GM12878 (cell line): ENCODE measurements at regions of chr14 and their contacts with region 1.

Region 1: DNA sequence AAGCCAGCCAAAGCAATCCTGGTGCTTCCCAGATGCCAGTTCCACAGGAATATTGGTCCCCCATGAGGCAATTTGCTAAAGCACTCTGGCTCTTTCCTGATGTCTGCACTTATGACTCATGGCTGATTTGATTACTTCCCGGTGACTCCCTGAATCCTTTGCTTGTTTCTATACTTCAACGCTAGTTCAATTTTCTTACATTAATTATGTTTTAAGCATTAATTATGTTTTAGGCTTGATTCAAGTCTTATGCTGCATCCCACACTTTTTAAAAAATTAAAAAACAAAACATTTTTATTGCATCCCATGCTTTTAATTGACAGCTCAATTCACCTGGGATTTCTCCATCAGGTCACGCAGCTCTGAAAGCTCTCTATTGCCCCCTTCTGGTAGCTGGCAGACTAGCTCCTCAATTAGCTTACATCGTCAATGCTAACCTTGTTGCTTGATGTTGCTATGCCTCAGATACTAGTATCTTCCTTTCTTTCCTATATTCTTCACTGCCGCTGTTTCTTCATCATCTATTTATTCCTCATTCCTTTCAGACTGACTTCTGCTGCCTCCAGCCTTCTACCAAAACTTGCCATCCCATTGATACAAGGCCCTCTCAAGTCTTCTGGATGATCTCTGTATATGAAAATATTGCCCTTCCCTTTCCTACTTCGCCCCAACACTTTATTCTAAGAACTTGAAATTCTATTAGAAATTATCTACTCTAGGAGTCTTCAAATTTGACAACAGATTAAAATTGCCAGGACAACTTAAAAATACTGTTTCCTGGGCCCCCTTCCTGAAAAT is 32.0 kb downstream of the TSHR start:
- DNase-seq: no peak
- ATAC-seq: peak; percentile 86
- H3K4me3 ChIP-seq: no peak overlapping the region
- H3K27ac ChIP-seq: no peak overlapping the region
- H3K4me1 ChIP-seq: no peaks in the 10 kb centered on the region
- H3K27me3 ChIP-seq: peaks cover 2 to 14% of the 10 kb centered on the region in 2 experiments
- CTCF ChIP-seq: peak; percentile 88 to 90 (median 89)
- EP300 ChIP-seq: no peak
- POLR2A ChIP-seq: no peak
- RAD21 ChIP-seq: peak; percentile 91

Region 2: GRCh38 chr14:80202888-80203562 is 784.4 kb before region 1 on chr14:
- CTCF ChIA-PET with region 1: interaction called, 4 read pairs
- POLR2A ChIA-PET with region 1: no interaction called
- RAD21 ChIA-PET with region 1: no interaction called
- SMC1A ChIA-PET with region 1: no interaction called
- in situ Hi-C with region 1: no loop called
- intact Hi-C with region 1: loop called (anchors 10 kb)
- DNase-seq: no peak
- ATAC-seq: peak; percentile 71
- H3K4me3 ChIP-seq: no peak overlapping the region
- H3K27ac ChIP-seq: no peak overlapping the region
- H3K4me1 ChIP-seq: no peaks in the 10 kb centered on the region
- H3K27me3 ChIP-seq: no peaks in the 10 kb centered on the region
- CTCF ChIP-seq: peak; percentile 56 to 79 (median 65)
- EP300 ChIP-seq: no peak
- POLR2A ChIP-seq: no peak
- RAD21 ChIP-seq: peak; percentile 41

Region 3: DNA sequence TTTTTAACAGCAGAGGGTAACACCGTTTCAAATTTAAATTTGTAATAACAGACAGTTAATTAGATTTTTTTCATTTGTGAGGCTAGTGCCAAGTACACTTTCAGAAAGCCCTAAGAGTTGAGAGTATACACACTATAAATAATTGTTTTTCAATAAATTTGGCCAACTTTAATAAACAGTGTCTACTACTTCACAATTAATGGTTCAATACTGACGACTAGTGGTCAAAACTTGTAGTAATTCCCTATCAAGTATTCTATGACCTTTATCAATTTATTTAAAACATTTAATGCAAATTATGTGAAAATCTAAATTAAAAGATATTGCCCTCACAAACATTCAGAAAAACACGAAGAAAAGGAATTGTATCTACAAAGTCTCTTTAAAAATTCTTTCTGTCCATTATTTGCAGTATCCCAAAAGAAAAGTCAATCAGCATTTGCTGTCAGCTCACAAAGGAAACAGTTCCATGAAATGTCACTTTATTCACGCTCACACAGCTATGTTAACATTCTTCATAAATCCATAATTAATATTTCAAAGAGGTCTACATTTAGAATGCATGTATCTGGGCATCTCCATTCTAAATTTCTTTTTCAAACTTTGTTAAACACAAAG is 137.1 kb before region 1 on chr14:
- CTCF ChIA-PET with region 1: interaction called, 7 read pairs
- POLR2A ChIA-PET with region 1: no interaction called
- RAD21 ChIA-PET with region 1: interaction called, 3 read pairs
- SMC1A ChIA-PET with region 1: interaction called, 5 read pairs
- in situ Hi-C with region 1: no loop called
- intact Hi-C with region 1: loop called (anchors 2 kb)
- DNase-seq: no peak
- ATAC-seq: peak; percentile 73
- H3K4me3 ChIP-seq: no peak overlapping the region
- H3K27ac ChIP-seq: no peak overlapping the region
- H3K4me1 ChIP-seq: no peaks in the 10 kb centered on the region
- H3K27me3 ChIP-seq: no peaks in the 10 kb centered on the region
- CTCF ChIP-seq: peak; percentile 30 to 60 (median 33); a peak in 2 of 6 replicates
- EP300 ChIP-seq: no peak
- POLR2A ChIP-seq: no peak
- RAD21 ChIP-seq: peak; percentile 71

Region 4: DNA sequence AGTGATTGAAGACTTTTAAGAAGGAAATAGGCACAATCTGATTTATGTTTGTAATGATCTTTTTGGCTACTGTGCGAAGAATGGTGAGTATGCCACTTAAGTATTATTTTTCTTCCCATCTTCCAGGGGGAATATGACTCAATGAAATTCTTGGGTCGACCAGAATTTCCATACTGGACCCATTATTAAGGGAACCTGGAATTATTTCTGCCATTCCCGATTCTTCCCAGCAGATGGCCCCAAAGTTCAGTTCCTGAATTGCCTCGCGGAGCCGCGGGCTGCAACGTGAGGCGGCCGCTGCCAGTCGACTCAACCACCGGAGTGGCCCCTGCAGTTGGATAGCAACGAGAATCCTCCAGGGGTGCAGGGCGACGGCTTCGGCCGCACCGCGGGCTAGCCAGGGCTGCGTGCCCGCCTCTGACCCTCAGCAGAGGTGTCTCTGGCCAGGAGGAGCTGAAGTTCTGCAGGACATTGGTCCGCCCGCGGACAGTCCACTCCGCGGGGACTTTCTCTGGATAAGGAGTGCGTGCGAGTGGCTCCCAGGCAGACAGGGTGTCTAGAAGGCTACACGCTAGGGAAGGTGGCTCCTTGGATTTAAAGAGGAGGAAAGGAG is 32.6 kb before region 1 on chr14:
- CTCF ChIA-PET with region 1: interaction called, 178 read pairs
- POLR2A ChIA-PET with region 1: interaction called, 3 read pairs
- RAD21 ChIA-PET with region 1: interaction called, 64 read pairs
- SMC1A ChIA-PET with region 1: interaction called, 55 read pairs
- in situ Hi-C with region 1: loop called (anchors 5 kb)
- intact Hi-C with region 1: loop called (anchors 1 kb)
- DNase-seq: no peak
- ATAC-seq: peak; percentile 46
- H3K4me3 ChIP-seq: no peak overlapping the region; the same call in 1 of the 2 replicates
- H3K27ac ChIP-seq: no peak overlapping the region
- H3K4me1 ChIP-seq: peaks cover 12% of the 10 kb centered on the region
- H3K27me3 ChIP-seq: peaks cover 0 to 5% of the 10 kb centered on the region in 2 experiments; a peak in 3 of 4 replicates
- CTCF ChIP-seq: peak; percentile 70 to 83 (median 71)
- EP300 ChIP-seq: no peak
- POLR2A ChIP-seq: no peak
- RAD21 ChIP-seq: peak; percentile 84

Region 5: GRCh38 chr14:81009346-81009745 is 21.9 kb after region 1 on chr14:
- CTCF ChIA-PET with region 1: interaction called, 10 read pairs
- POLR2A ChIA-PET with region 1: no interaction called
- RAD21 ChIA-PET with region 1: no interaction called
- SMC1A ChIA-PET with region 1: no interaction called
- in situ Hi-C with region 1: no loop called
- intact Hi-C with region 1: no loop called
- DNase-seq: no peak
- ATAC-seq: no peak
- H3K4me3 ChIP-seq: no peak overlapping the region
- H3K27ac ChIP-seq: no peak overlapping the region
- H3K4me1 ChIP-seq: no peaks in the 10 kb centered on the region
- H3K27me3 ChIP-seq: no peaks in the 10 kb centered on the region
- CTCF ChIP-seq: no peak
- EP300 ChIP-seq: no peak
- POLR2A ChIP-seq: no peak
- RAD21 ChIP-seq: no peak

Region 6: DNA sequence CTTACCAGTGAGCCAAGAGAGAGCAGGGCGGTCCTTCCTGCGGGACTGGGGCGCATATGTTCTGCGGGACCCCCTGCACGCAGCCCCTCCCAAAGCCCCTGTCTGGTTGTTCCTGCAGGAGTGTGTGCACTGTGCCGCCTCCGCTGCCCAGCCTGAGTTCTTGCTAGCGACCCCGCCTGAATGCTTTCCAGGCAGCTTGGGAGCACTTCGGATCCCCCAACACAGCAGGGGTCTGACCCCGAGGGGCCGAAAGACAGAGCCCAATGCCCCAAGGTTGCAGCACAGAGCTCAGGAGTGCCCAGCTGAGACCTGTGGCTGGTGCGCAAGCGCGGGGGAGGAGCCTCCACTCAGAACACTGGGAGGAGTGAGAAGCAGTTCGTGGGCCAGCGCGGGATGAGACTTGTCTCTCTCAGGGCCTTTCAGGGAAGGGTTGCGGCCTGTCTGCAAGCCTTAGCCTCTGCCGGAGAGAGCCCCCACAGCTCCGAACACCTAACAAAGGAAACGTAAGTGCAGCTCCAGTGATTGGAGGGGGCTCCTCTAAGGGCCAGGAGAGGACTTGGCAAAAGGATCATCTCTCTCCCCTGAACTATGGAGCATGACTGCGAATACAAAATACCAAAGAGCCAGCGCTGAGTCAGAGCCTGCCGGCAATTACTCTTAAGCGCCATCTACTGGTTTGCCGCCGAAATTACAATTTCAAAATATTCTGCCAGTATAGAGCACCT is 182.8 kb after region 1 on chr14:
- CTCF ChIA-PET with region 1: interaction called, 23 read pairs
- POLR2A ChIA-PET with region 1: no interaction called
- RAD21 ChIA-PET with region 1: interaction called, 9 read pairs
- SMC1A ChIA-PET with region 1: interaction called, 11 read pairs
- in situ Hi-C with region 1: no loop called
- intact Hi-C with region 1: no loop called
- DNase-seq: peak; percentile 61
- ATAC-seq: peak; percentile 99
- H3K4me3 ChIP-seq: peak overlapping the region; percentile 80
- H3K27ac ChIP-seq: peak overlapping the region; percentile 84
- H3K4me1 ChIP-seq: peaks cover 32% of the 10 kb centered on the region
- H3K27me3 ChIP-seq: no peaks in the 10 kb centered on the region
- CTCF ChIP-seq: peak; percentile 82 to 86 (median 83)
- EP300 ChIP-seq: no peak
- POLR2A ChIP-seq: peak; percentile 87
- RAD21 ChIP-seq: peak; percentile 75